T-cell (primary cell): ENCODE measurements at regions of chr1 and their contacts with region 1.

Region 1: GRCh38 chr1:153922972-153923925 is at the start of gene GATAD2B:
- DNase-seq: peak; percentile 92 to 100 (median 99)
- ATAC-seq: peak; percentile 92 to 96 (median 94)
- H3K4me3 ChIP-seq: peak within 1 kb of the TSS; percentile 69 to 90
- H3K4me3 Mint-ChIP-seq: peak within 1 kb of the TSS; percentile 91 to 96 (median 94)
- H3K27ac ChIP-seq: peak within 1 kb of the TSS; percentile 88
- H3K27ac Mint-ChIP-seq: peak within 1 kb of the TSS; percentile 95 to 97
- H3K4me1 ChIP-seq: peaks cover 27 to 39% of the 10 kb centered on the region in 2 experiments
- H3K4me1 Mint-ChIP-seq: peaks cover 37 to 52% (median 51%) of the 10 kb centered on the region in 3 donors
- H3K27me3 ChIP-seq: no peaks in the 10 kb centered on the region
- H3K27me3 Mint-ChIP-seq: peaks cover 0 to 1% of the 10 kb centered on the region in 2 donors
- total RNA-seq, gene GATAD2B: 94.6 to 107 (median 103) TPM

Region 2: GRCh38 chr1:153633716-153634665 is 289.3 kb before region 1 on chr1 and contains the start of gene CHTOP:
- CTCF ChIA-PET with region 1: no interaction called
- POLR2A ChIA-PET with region 1: interaction called in 1 of 2 experiments, 13 read pairs
- DNase-seq: peak; percentile 88 to 99 (median 94)
- ATAC-seq: peak; percentile 89 to 96 (median 90)
- H3K4me3 ChIP-seq: peak within 1 kb of the TSS; percentile 96 to 98
- H3K4me3 Mint-ChIP-seq: peak within 1 kb of the TSS; percentile 97 to 100 (median 98)
- H3K27ac ChIP-seq: peak within 1 kb of the TSS; percentile 99
- H3K27ac Mint-ChIP-seq: peak within 1 kb of the TSS; percentile 99 to 100
- H3K4me1 ChIP-seq: peaks cover 6 to 30% of the 10 kb centered on the region in 2 experiments
- H3K4me1 Mint-ChIP-seq: peaks cover 38 to 46% (median 41%) of the 10 kb centered on the region in 3 donors
- H3K27me3 ChIP-seq: no peaks in the 10 kb centered on the region
- H3K27me3 Mint-ChIP-seq: no peaks in the 10 kb centered on the region
- total RNA-seq, gene CHTOP: 76.7 to 131 (median 130) TPM

Region 3: GRCh38 chr1:153827168-153827964 is 95.9 kb before region 1 on chr1:
- CTCF ChIA-PET with region 1: interaction called, 3 read pairs
- POLR2A ChIA-PET with region 1: interaction called in 1 of 2 experiments, 11 read pairs
- DNase-seq: no peak
- ATAC-seq: no peak
- H3K4me3 ChIP-seq: no peak overlapping the region
- H3K4me3 Mint-ChIP-seq: no peak overlapping the region
- H3K27ac ChIP-seq: no peak overlapping the region
- H3K27ac Mint-ChIP-seq: no peak overlapping the region
- H3K4me1 ChIP-seq: no peaks in the 10 kb centered on the region
- H3K4me1 Mint-ChIP-seq: peaks cover 2 to 6% (median 3%) of the 10 kb centered on the region in 3 donors
- H3K27me3 ChIP-seq: no peaks in the 10 kb centered on the region
- H3K27me3 Mint-ChIP-seq: no peaks in the 10 kb centered on the region

Region 4: GRCh38 chr1:153842006-153842471 is 81.2 kb before region 1 on chr1:
- CTCF ChIA-PET with region 1: no interaction called
- POLR2A ChIA-PET with region 1: no interaction called
- DNase-seq: no peak
- ATAC-seq: no peak
- H3K4me3 ChIP-seq: no peak overlapping the region
- H3K4me3 Mint-ChIP-seq: no peak overlapping the region
- H3K27ac ChIP-seq: no peak overlapping the region
- H3K27ac Mint-ChIP-seq: peak overlapping the region; percentile 10 to 40
- H3K4me1 ChIP-seq: no peaks in the 10 kb centered on the region
- H3K4me1 Mint-ChIP-seq: peaks cover 12 to 32% (median 32%) of the 10 kb centered on the region in 3 donors
- H3K27me3 ChIP-seq: no peaks in the 10 kb centered on the region
- H3K27me3 Mint-ChIP-seq: no peaks in the 10 kb centered on the region

Region 5: GRCh38 chr1:153946622-153947241 is 23.5 kb after region 1 on chr1 and contains the start of gene DENND4B:
- CTCF ChIA-PET with region 1: interaction called, 3 to 25 read pairs
- POLR2A ChIA-PET with region 1: interaction called, 4 to 11 read pairs
- DNase-seq: peak; percentile 33 to 83 (median 60)
- ATAC-seq: peak; percentile 63 to 68 (median 66)
- H3K4me3 ChIP-seq: peak within 1 kb of the TSS; percentile 70 to 83
- H3K4me3 Mint-ChIP-seq: peak within 1 kb of the TSS; percentile 91 to 94 (median 92)
- H3K27ac ChIP-seq: peak within 1 kb of the TSS; percentile 84
- H3K27ac Mint-ChIP-seq: peak within 1 kb of the TSS; percentile 90 to 96
- H3K4me1 ChIP-seq: peaks cover 9 to 44% of the 10 kb centered on the region in 2 experiments
- H3K4me1 Mint-ChIP-seq: peaks cover 30 to 40% (median 34%) of the 10 kb centered on the region in 3 donors
- H3K27me3 ChIP-seq: no peaks in the 10 kb centered on the region
- H3K27me3 Mint-ChIP-seq: no peaks in the 10 kb centered on the region
- total RNA-seq, gene DENND4B: 161 to 220 (median 196) TPM

Region 6: DNA sequence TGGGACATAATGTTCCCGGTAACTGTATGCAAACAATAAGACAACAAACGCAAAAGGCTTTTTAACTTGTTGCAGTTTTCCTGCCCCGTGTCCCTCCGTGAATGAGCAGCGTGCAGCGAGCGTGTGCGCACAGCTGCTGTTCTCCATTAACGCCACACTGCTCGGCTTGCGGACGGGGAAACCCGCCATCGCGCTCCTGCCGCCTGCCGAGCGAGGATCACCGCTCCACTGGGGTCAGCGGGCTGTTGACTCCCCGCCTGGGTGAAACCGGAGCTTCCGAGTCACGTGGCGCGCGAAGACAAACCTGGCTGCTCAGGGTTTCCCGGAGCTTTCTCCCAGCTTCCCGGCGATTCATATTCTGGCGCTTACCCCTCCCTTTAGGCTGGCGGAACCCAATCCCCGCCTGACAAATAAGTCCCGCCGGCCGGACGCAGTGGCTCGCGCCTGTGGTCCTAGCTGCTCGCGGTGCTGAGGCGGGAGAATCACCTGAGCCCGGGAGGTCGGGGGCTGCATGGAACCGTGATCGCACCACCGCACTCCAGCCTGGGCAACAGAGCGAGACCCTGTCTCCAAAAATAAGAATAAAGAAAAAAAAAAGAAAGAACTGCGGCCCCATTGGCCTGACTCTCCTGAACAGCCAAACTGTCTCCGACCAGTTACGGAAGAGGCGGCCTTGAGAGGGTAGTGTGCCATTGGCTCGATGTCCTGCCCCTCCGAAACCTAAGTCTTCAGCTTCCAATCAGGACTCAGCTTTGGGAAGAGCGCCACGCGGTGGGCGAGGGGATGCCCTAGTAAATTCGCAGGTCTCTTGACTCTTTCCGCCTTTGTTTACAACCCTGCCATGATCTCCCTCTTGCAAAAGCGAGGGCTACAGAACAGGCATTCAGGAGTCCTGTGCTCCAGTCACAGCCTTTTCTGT is 44.1 kb after region 1 on chr1 and contains the start of gene CREB3L4:
- CTCF ChIA-PET with region 1: interaction called in 1 of 2 experiments, 4 read pairs
- POLR2A ChIA-PET with region 1: interaction called, 7 to 17 read pairs
- DNase-seq: peak; percentile 69 to 94 (median 84)
- ATAC-seq: peak; percentile 85 to 87 (median 86)
- H3K4me3 ChIP-seq: peak within 1 kb of the TSS; percentile 78 to 91
- H3K4me3 Mint-ChIP-seq: peak within 1 kb of the TSS; percentile 86 to 95 (median 92)
- H3K27ac ChIP-seq: peak within 1 kb of the TSS; percentile 82
- H3K27ac Mint-ChIP-seq: peak within 1 kb of the TSS; percentile 97 to 98
- H3K4me1 ChIP-seq: peaks cover 20 to 53% of the 10 kb centered on the region in 2 experiments
- H3K4me1 Mint-ChIP-seq: peaks cover 48 to 67% (median 53%) of the 10 kb centered on the region in 3 donors
- H3K27me3 ChIP-seq: no peaks in the 10 kb centered on the region
- H3K27me3 Mint-ChIP-seq: no peaks in the 10 kb centered on the region
- total RNA-seq, gene CREB3L4: 3.3 to 9.0 (median 6.3) TPM

Region 7: GRCh38 chr1:153977250-153978240 is 54.3 kb after region 1 on chr1 and contains the start of gene JTB:
- CTCF ChIA-PET with region 1: interaction called in 1 of 2 experiments, 4 read pairs
- POLR2A ChIA-PET with region 1: interaction called, 14 to 20 read pairs
- DNase-seq: peak; percentile 66 to 91 (median 81)
- ATAC-seq: peak; percentile 94 to 98 (median 96)
- H3K4me3 ChIP-seq: peak within 1 kb of the TSS; percentile 93 to 96
- H3K4me3 Mint-ChIP-seq: peak within 1 kb of the TSS; percentile 92 to 97 (median 97)
- H3K27ac ChIP-seq: peak within 1 kb of the TSS; percentile 74
- H3K27ac Mint-ChIP-seq: peak within 1 kb of the TSS; percentile 96 to 98
- H3K4me1 ChIP-seq: peaks cover 15 to 28% of the 10 kb centered on the region in 2 experiments
- H3K4me1 Mint-ChIP-seq: peaks cover 34 to 41% (median 36%) of the 10 kb centered on the region in 3 donors
- H3K27me3 ChIP-seq: no peaks in the 10 kb centered on the region
- H3K27me3 Mint-ChIP-seq: no peaks in the 10 kb centered on the region
- total RNA-seq, gene JTB: 90.4 to 137 (median 129) TPM